ENCODE measurements at regions of chr3 and their contacts with region 1.

Region 1: GRCh38 chr3:39234705-39235104 is 42.3 kb upstream of the XIRP1 start:
- DNase-seq: peak; percentile 50 to 75
- ATAC-seq: peak; percentile 93 to 96 (median 95)
- H3K4me3 ChIP-seq: peak overlapping the region; percentile 34
- H3K4me3 Mint-ChIP-seq: peak overlapping the region; percentile 90
- H3K27ac ChIP-seq: peak overlapping the region; percentile 74
- H3K27ac Mint-ChIP-seq: peak overlapping the region; percentile 93 to 95
- H3K4me1 ChIP-seq: peaks cover 69% of the 10 kb centered on the region
- H3K4me1 Mint-ChIP-seq: peaks cover 90 to 92% of the 10 kb centered on the region in 2 donors
- H3K27me3 ChIP-seq: no peaks in the 10 kb centered on the region
- H3K27me3 Mint-ChIP-seq: no peaks in the 10 kb centered on the region
- CTCF ChIP-seq: no peak

Region 2: DNA sequence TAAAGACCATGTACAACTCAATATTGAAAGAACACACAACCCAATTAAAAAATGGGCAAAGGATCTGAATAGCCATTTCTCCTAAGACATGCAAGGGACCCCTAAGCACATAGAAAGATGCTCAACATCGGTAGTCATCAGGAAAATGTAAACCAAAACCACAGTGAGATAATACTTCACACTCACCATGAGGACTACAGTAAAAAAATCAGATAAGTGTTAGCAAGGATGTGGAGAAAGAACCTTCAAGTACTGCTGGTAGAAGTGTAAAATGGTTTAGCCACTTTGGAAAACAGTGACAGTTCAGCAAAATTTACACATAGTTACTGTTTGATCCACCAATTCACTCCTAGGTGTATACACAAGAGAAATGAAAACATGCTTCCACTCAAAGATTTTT is 12.2 kb before region 1 on chr3:
- intact Hi-C with region 1: loop called (anchors 1 kb)
- DNase-seq: peak in 1 of 2 donors; percentile 48
- ATAC-seq: peak; percentile 71 to 88 (median 85)
- H3K4me3 ChIP-seq: no peak overlapping the region
- H3K4me3 Mint-ChIP-seq: peak overlapping the region; percentile 89
- H3K27ac ChIP-seq: peak overlapping the region; percentile 47
- H3K27ac Mint-ChIP-seq: peak overlapping the region; percentile 86 to 89
- H3K4me1 ChIP-seq: peaks cover 32% of the 10 kb centered on the region
- H3K4me1 Mint-ChIP-seq: peaks cover 78 to 84% of the 10 kb centered on the region in 2 donors
- H3K27me3 ChIP-seq: no peaks in the 10 kb centered on the region
- H3K27me3 Mint-ChIP-seq: no peaks in the 10 kb centered on the region
- CTCF ChIP-seq: no peak

Region 3: DNA sequence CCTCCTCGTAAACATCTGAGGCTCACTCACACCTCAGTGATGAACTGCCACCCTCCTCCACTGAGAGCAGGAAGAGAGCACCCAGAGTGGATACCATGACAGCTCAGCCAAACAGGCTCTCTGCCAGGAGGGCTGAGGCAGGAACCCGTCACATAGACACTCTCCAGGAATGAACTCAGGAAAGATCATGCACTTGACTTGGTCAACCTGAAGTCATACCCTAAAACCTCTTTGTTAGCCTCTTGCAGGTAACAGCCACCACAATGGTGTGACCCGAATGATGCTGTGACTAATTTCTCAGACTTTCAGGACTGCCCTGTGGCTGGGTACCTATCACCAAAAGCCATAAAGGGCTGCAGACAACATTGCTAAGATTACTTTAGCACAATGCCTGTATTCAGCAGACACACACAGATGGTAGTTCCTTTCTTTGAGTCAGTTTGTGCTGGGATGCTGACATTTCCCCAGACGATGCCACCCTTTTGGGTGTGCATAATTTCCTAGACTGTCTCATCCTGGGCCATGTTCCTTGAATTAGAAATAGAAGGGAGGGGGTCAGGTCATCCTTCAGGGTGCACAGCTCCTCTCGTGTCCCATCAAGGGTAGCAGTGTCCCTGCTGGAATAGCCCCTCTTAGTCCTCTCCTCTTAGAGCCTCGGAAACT is 14.9 kb after region 1 on chr3:
- intact Hi-C with region 1: loop called (anchors 2 kb)
- DNase-seq: peak in 1 of 2 donors; percentile 40
- ATAC-seq: peak; percentile 76 to 90 (median 86)
- H3K4me3 ChIP-seq: no peak overlapping the region
- H3K4me3 Mint-ChIP-seq: peak overlapping the region; percentile 66
- H3K27ac ChIP-seq: peak overlapping the region; percentile 57
- H3K27ac Mint-ChIP-seq: peak overlapping the region; percentile 83 to 89
- H3K4me1 ChIP-seq: peaks cover 47% of the 10 kb centered on the region
- H3K4me1 Mint-ChIP-seq: peaks cover 55 to 69% of the 10 kb centered on the region in 2 donors
- H3K27me3 ChIP-seq: no peaks in the 10 kb centered on the region
- H3K27me3 Mint-ChIP-seq: no peaks in the 10 kb centered on the region
- CTCF ChIP-seq: no peak

Region 4: DNA sequence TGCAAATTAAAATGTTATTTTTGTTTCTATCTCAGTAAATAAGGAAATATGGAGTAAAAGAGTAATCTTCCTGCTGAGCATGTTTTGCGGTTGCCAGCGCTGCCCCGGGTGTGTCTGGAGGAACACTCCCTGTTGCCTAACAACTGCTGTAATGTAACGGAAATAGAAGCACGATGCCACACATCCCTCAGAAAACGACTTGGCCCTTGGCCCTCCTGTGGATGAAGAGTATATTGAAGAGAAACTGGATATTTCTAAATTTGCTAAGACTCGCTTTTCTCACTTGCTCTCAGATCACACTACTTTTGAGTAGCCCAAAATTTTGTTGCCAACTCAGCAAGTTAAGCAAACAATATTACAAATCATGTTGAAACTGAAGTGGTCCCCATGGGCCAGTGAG is 26.3 kb after region 1 on chr3:
- intact Hi-C with region 1: loop called (anchors 1 kb)
- DNase-seq: peak; percentile 62 to 83
- ATAC-seq: peak; percentile 71 to 93 (median 75)
- H3K4me3 ChIP-seq: no peak overlapping the region
- H3K4me3 Mint-ChIP-seq: peak overlapping the region; percentile 84
- H3K27ac ChIP-seq: peak overlapping the region; percentile 90
- H3K27ac Mint-ChIP-seq: peak overlapping the region; percentile 91 to 92
- H3K4me1 ChIP-seq: peaks cover 75% of the 10 kb centered on the region
- H3K4me1 Mint-ChIP-seq: peaks cover 90 to 97% of the 10 kb centered on the region in 2 donors
- H3K27me3 ChIP-seq: no peaks in the 10 kb centered on the region
- H3K27me3 Mint-ChIP-seq: no peaks in the 10 kb centered on the region
- CTCF ChIP-seq: peak; percentile 55

Region 5: GRCh38 chr3:40404591-40405198 is 1170.0 kb after region 1 on chr3:
- intact Hi-C with region 1: no loop called
- DNase-seq: no peak
- ATAC-seq: no peak
- H3K4me3 ChIP-seq: no peak overlapping the region
- H3K4me3 Mint-ChIP-seq: no peak overlapping the region
- H3K27ac ChIP-seq: no peak overlapping the region
- H3K27ac Mint-ChIP-seq: no peak overlapping the region
- H3K4me1 ChIP-seq: no peaks in the 10 kb centered on the region
- H3K4me1 Mint-ChIP-seq: no peaks in the 10 kb centered on the region
- H3K27me3 ChIP-seq: no peaks in the 10 kb centered on the region
- H3K27me3 Mint-ChIP-seq: no peaks in the 10 kb centered on the region
- CTCF ChIP-seq: no peak